Gastrocnemius medialis (tissue), 4 donors: ENCODE measurements at regions of chr17 and their contacts with region 1.

Region 1: DNA sequence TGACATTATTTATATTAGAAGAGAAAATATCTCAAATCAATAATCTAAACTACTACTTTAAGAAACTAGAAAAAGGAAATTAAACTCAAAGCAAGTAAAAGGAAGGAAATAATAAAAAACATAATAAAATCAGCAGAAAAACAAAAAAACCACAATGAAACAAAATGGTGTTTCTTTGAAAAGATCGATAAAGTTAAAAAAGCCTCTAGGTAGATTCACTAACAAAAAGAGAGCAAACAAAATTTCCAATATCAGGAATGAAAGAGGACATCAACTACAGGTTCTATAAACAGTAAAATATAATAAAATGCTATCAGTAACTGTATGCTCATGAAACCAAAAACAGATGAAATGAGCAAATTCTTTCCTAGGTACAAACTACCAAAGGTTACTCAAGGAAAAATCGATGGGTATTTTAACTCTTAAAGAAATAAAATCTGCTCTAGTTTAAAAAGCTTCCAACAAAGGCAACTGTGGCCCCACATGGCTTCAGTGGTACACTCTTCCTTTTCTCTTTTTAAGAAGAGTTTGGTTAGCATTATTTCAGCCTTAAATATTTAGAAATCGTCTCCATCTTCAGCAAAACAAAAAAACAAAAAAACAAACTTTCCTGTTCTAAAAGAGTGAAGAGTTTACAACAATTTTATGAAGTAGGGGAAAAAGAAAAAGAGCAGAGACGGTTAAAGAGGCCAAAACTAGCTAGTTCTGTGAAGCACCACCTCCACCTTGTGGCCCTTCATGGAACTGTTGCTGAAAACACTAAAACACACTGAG is 102.2 kb downstream of the TRIM37 start:
- DNase-seq: peak; percentile 6 to 29
- ATAC-seq: peak; percentile 74 to 85
- H3K4me3 ChIP-seq: no peak overlapping the region
- H3K27ac ChIP-seq: no peak overlapping the region
- H3K4me1 ChIP-seq: no peaks in the 10 kb centered on the region
- H3K27me3 ChIP-seq: no peaks in the 10 kb centered on the region
- CTCF ChIP-seq: peak; percentile 77 to 94 (median 79)
- POLR2A ChIP-seq: no peak

Region 2: GRCh38 chr17:58587702-58588254 is 416.7 kb before region 1 on chr17:
- in situ Hi-C with region 1: loop called in 1 of 4 experiments (anchors 25 kb)
- intact Hi-C with region 1: loop called (anchors 1 kb)
- DNase-seq: peak in 1 of 2 donors; percentile 20
- ATAC-seq: peak; percentile 45 to 84
- H3K4me3 ChIP-seq: no peak overlapping the region
- H3K27ac ChIP-seq: no peak overlapping the region
- H3K4me1 ChIP-seq: no peaks in the 10 kb centered on the region
- H3K27me3 ChIP-seq: no peaks in the 10 kb centered on the region
- CTCF ChIP-seq: peak; percentile 61 to 87 (median 73)
- POLR2A ChIP-seq: no peak

Region 3: GRCh38 chr17:58710936-58711775 is 293.4 kb before region 1 on chr17:
- in situ Hi-C with region 1: loop called in 2 of 4 experiments (anchors 10 to 25 kb)
- intact Hi-C with region 1: loop called (anchors 2 kb)
- DNase-seq: no peak
- ATAC-seq: no peak
- H3K4me3 ChIP-seq: no peak overlapping the region
- H3K27ac ChIP-seq: no peak overlapping the region
- H3K4me1 ChIP-seq: no peaks in the 10 kb centered on the region
- H3K27me3 ChIP-seq: no peaks in the 10 kb centered on the region
- CTCF ChIP-seq: peak; percentile 24 to 61 (median 41)
- POLR2A ChIP-seq: no peak

Region 4: GRCh38 chr17:59829217-59830006 is 824.9 kb after region 1 on chr17:
- in situ Hi-C with region 1: no loop called
- intact Hi-C with region 1: no loop called
- DNase-seq: no peak
- ATAC-seq: peak; percentile 8 to 23
- H3K4me3 ChIP-seq: no peak overlapping the region
- H3K27ac ChIP-seq: peak overlapping the region; percentile 30 to 91 (median 73)
- H3K4me1 ChIP-seq: peaks cover 23 to 63% of the 10 kb centered on the region in 2 donors
- H3K27me3 ChIP-seq: no peaks in the 10 kb centered on the region
- CTCF ChIP-seq: no peak
- POLR2A ChIP-seq: no peak